Prostate gland (tissue), 2 donors: ENCODE measurements at regions of chr15 and their contacts with region 1.

Region 1: GRCh38 chr15:79380755-79381497 is 51.2 kb upstream of the MINAR1 start:
- DNase-seq: peak; percentile 68
- H3K4me3 ChIP-seq: no peak overlapping the region
- H3K27ac ChIP-seq: no peak overlapping the region
- H3K4me1 ChIP-seq: no peaks in the 10 kb centered on the region
- H3K27me3 ChIP-seq: no peaks in the 10 kb centered on the region
- CTCF ChIP-seq: peak; percentile 83 to 93 (median 88)
- POLR2A ChIP-seq: no peak

Region 2: DNA sequence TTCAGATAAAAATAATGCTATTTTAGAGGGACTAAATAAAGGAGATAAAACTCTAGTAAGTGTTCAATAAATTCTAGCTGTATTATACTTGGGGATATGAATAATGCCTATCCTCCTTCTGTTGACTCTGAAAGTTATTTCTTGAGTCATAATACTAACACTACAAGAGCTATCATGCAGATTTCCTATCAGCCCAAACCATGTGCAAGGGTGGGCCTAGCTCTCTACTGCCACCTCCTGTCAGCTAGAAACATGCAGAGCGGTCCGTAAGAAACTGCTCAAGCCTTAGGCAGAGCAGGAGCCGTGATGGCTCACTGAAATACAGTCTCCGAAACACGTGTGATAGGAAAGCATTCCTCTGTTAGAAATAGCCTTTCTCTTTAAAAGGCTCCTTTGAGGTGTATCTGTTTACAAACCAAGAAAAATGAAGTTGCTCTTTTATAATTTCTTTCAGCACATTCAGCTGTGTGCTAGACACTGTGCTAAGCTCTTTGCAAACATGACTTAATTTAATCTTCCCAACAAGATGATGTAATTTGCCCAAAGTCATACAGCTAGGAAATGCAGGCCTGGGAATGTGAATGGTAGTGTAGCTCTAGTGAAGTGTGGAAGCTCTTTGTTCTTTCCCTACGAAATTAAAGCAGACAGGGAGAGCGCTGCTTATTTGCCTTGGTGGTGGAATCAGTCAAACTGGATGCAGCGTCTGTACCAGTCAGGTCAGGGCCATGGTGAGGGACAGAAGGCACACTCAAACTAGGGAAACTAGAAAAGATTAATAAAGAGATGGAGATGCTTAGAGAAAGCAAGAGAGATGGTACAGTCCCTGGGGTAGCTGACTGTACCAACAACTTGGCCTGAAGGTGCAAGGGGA is 472.8 kb after region 1 on chr15:
- intact Hi-C with region 1: loop called (anchors 2 kb)
- DNase-seq: peak; percentile 61
- H3K4me3 ChIP-seq: no peak overlapping the region
- H3K27ac ChIP-seq: no peak overlapping the region
- H3K4me1 ChIP-seq: no peaks in the 10 kb centered on the region
- H3K27me3 ChIP-seq: no peaks in the 10 kb centered on the region
- CTCF ChIP-seq: peak; percentile 67 to 82 (median 82)
- POLR2A ChIP-seq: no peak

Region 3: GRCh38 chr15:79989682-79990081 is 608.8 kb after region 1 on chr15:
- intact Hi-C with region 1: loop called (anchors 5 kb)
- DNase-seq: no peak
- H3K4me3 ChIP-seq: no peak overlapping the region
- H3K27ac ChIP-seq: no peak overlapping the region
- H3K4me1 ChIP-seq: no peaks in the 10 kb centered on the region
- H3K27me3 ChIP-seq: no peaks in the 10 kb centered on the region
- CTCF ChIP-seq: no peak
- POLR2A ChIP-seq: no peak